B cell (primary cell): ENCODE measurements at regions of chr15 and their contacts with region 1.

Region 1: GRCh38 chr15:48877630-48878595 is at the start of gene EID1:
- DNase-seq: peak; percentile 95
- ATAC-seq: peak; percentile 95
- H3K4me3 ChIP-seq: peak within 1 kb of the TSS; percentile 56 to 91 (median 82)
- H3K4me3 Mint-ChIP-seq: peak within 1 kb of the TSS; percentile 100
- H3K27ac ChIP-seq: peak within 1 kb of the TSS; percentile 79 to 83
- H3K27ac Mint-ChIP-seq: peak within 1 kb of the TSS; percentile 99
- H3K4me1 ChIP-seq: peaks cover 0 to 12% of the 10 kb centered on the region in 2 donors
- H3K4me1 Mint-ChIP-seq: peaks cover 25% of the 10 kb centered on the region
- H3K27me3 ChIP-seq: peaks cover 0 to 4% (median 1%) of the 10 kb centered on the region in 4 experiments
- H3K27me3 Mint-ChIP-seq: peaks cover 8% of the 10 kb centered on the region
- CTCF ChIP-seq: no peak
- total RNA-seq, gene EID1: 56.5 and 62.7 TPM in 2 replicates

Region 2: GRCh38 chr15:48177766-48178647 is 699.9 kb before region 1 on chr15 and contains the start of gene MYEF2:
- CTCF ChIA-PET with region 1: no interaction called
- POLR2A ChIA-PET with region 1: no interaction called
- intact Hi-C with region 1: loop called (anchors 5 kb)
- DNase-seq: peak; percentile 80
- ATAC-seq: peak; percentile 72
- H3K4me3 ChIP-seq: peak within 1 kb of the TSS; percentile 47 to 71 (median 67)
- H3K4me3 Mint-ChIP-seq: peak within 1 kb of the TSS; percentile 95
- H3K27ac ChIP-seq: peak within 1 kb of the TSS; percentile 21 to 81
- H3K27ac Mint-ChIP-seq: peak within 1 kb of the TSS; percentile 92
- H3K4me1 ChIP-seq: peaks cover 8 to 11% of the 10 kb centered on the region in 2 donors
- H3K4me1 Mint-ChIP-seq: peaks cover 18% of the 10 kb centered on the region
- H3K27me3 ChIP-seq: peaks cover 0 to 5% (median 2%) of the 10 kb centered on the region in 4 experiments
- H3K27me3 Mint-ChIP-seq: peaks cover 17% of the 10 kb centered on the region
- CTCF ChIP-seq: peak; percentile 35
- total RNA-seq, gene MYEF2: 34.3 and 36.3 TPM in 2 replicates

Region 3: GRCh38 chr15:49155110-49155833 is 277.4 kb after region 1 on chr15 and contains the start of gene COPS2:
- CTCF ChIA-PET with region 1: no interaction called
- POLR2A ChIA-PET with region 1: interaction called, 3 read pairs
- intact Hi-C with region 1: loop called (anchors 1 kb)
- DNase-seq: peak; percentile 97
- ATAC-seq: peak; percentile 93
- H3K4me3 ChIP-seq: peak within 1 kb of the TSS; percentile 80 to 99 (median 90)
- H3K4me3 Mint-ChIP-seq: peak within 1 kb of the TSS; percentile 98
- H3K27ac ChIP-seq: peak within 1 kb of the TSS; percentile 92 to 94
- H3K27ac Mint-ChIP-seq: peak within 1 kb of the TSS; percentile 96
- H3K4me1 ChIP-seq: peaks cover 11 to 25% of the 10 kb centered on the region in 2 donors
- H3K4me1 Mint-ChIP-seq: peaks cover 41% of the 10 kb centered on the region
- H3K27me3 ChIP-seq: no peaks in the 10 kb centered on the region
- H3K27me3 Mint-ChIP-seq: no peaks in the 10 kb centered on the region
- CTCF ChIP-seq: peak; percentile 9
- total RNA-seq, gene COPS2: 44.5 and 47.8 TPM in 2 replicates